ENCODE measurements at regions of chr15 and their contacts with region 1.

Region 1: GRCh38 chr15:31200735-31201151 is 99.2 kb upstream of the TRPM1 start:
- DNase-seq: peak in 1 of 2 donors; percentile 63
- H3K4me3 ChIP-seq: no peak overlapping the region
- H3K27ac ChIP-seq: no peak overlapping the region
- H3K4me1 ChIP-seq: no peaks in the 10 kb centered on the region
- H3K27me3 ChIP-seq: no peaks in the 10 kb centered on the region
- CTCF ChIP-seq: peak in 3 of 4 experiments; percentile 17 to 63 (median 39)
- POLR2A ChIP-seq: no peak

Region 2: DNA sequence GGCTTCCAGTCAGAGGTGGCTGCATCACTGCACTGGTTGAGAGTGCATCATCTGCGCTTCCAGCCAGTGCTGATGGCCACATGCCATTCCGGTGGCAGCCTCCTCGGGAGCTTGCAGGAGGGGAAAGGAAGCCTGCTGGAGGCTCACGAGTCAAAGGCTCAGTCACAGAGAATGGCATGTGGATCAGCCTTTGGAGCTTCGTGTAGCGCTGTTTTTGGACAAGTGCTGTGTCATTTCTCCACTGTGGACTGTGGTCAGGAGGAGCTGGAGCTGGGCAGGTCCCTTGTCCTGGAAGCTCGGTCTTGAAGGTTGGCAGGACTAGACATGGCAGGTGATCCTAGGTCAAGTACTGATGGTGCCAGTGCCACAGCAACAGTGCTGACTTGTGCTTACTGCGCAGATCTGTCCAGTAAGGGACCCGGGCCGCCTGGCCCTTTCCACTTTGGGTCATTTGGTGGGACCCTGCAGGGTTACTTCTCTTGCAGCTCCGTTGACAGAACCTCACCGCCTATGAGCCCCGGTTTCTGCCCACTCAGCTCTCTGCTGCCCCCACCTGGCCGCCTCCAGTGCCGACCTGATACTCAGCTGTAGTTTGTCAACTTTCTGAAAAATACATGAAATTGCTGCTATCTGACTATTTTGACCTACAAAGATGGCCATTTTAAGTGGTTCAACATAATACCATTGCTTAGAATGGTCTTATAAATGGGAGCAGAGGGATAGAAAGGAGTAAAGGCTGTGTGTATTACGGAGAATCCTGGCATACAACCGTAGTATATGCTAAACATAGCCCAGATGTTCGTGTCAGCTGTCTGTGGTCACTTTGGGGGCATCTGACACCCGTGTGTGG is 71.6 kb before region 1 on chr15:
- intact Hi-C with region 1: no loop called
- DNase-seq: peak; percentile 28 to 59
- H3K4me3 ChIP-seq: no peak overlapping the region
- H3K27ac ChIP-seq: no peak overlapping the region
- H3K4me1 ChIP-seq: no peaks in the 10 kb centered on the region
- H3K27me3 ChIP-seq: no peaks in the 10 kb centered on the region
- CTCF ChIP-seq: peak; percentile 76 to 84 (median 81)
- POLR2A ChIP-seq: no peak

Region 3: GRCh38 chr15:31252171-31252785 is 51.5 kb after region 1 on chr15:
- intact Hi-C with region 1: no loop called
- DNase-seq: no peak
- H3K4me3 ChIP-seq: no peak overlapping the region
- H3K27ac ChIP-seq: no peak overlapping the region
- H3K4me1 ChIP-seq: no peaks in the 10 kb centered on the region
- H3K27me3 ChIP-seq: no peaks in the 10 kb centered on the region
- CTCF ChIP-seq: no peak
- POLR2A ChIP-seq: no peak

Region 4: DNA sequence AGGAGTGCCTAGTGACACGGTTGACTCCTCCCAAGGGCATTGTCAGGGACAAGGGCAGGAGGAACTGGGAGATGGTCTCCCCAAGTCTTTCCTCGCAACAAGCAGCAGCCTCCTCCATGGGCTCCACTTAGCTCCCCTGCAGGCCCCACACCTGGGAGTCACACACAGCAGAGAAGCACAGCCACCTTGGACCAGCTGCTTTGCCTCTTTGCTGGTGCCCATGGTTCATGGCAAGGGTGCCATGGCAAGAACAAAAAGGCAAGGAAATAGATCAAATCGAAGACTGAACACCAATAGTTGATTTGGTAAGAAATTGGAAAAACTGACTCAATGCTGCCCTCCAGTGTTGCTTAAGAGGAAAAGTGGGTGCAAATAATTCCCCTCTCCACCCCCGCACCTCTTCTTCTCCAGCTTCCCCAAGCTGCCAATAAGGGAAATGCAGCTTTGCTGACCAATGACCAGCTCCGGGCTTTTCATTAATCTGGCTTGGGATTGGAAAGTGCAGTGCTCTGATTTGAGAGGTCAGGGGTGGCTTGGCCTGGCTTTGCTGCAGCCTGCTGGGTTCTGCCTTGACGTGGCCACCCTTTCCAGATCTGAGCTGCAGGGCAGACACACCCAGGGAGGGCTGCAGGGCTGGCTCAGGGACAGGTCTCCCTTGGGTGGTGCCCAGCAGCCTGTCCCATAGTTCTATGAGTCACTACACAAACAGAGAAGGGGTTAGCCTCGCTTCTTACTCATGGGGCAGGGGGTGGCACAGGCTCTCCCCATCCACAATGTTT is 287.9 kb after region 1 on chr15:
- intact Hi-C with region 1: loop called (anchors 10 kb)
- DNase-seq: peak; percentile 39 to 67
- H3K4me3 ChIP-seq: no peak overlapping the region
- H3K27ac ChIP-seq: peak overlapping the region; percentile 33 to 50
- H3K4me1 ChIP-seq: no peaks in the 10 kb centered on the region
- H3K27me3 ChIP-seq: no peaks in the 10 kb centered on the region
- CTCF ChIP-seq: peak; percentile 83 to 94 (median 90)
- POLR2A ChIP-seq: no peak